AG04450 (cell line): ENCODE measurements at regions of chr13 and their contacts with region 1.

Region 1: DNA sequence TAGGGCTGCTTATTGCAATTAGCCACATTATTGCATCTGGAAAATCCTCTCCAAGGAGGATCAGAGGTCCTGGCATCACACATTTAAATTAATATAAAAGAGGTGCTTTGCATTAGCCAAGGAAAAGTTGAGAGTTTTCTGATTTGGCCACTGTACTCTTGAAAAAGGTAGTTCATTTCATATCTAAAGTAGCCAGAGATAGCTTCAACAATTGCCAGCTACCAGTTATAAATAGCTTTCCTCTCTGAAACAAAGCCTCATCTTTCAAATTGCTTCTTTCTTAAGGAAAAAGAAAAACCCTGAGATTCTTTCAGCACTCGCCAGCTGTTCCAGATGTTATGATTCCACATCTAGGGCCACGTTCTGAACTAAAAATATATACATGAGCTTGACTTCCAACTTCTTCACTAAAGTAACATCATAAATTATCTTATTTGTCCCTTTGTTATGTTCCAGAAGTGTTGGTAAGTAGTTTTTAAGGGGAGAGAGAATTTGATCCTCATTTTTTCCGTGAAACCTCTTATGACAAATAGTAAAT is 69.6 kb downstream of the ERCC5 start:
- DNase-seq: no peak
- H3K4me3 ChIP-seq: no peak overlapping the region
- H3K27ac ChIP-seq: no peak overlapping the region
- H3K27me3 ChIP-seq: no peaks in the 10 kb centered on the region
- CTCF ChIP-seq: no peak

Region 2: DNA sequence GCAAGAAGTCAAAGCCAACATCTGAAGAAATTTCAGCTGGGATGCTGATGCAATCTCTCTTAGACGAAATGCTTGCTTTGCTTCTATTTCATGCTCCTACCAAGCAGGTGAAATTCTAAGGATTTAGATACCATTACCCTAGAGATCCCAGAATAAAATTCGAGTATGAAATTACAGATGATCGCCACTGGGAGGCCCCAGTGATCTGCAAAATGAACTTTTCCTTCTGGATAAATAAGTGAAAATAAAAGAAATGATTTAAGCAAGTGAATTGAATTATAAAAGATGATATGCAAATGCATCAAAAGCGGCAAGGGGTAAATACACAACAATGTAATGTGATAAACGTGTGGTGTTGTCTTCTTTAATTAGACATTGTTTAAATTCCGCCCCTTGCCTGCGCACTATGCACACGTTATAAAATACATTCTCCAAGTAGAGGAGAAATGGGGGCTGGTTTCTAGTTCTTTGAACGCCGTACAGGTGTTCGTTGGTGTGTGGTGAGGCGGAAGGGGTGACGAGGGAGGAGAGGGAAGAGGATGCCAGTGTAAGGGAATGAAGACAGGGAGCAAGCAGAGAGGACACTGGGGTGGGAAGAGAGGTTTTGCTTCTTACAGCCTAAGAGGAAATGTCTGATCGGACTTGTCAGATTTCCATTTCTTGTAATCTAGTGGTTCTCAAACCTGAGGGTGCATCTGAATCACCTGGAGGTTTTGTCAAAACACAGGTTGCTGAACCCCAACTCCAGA is 11.6 kb before region 1 on chr13:
- CTCF ChIA-PET with region 1: interaction called, 19 read pairs
- POLR2A ChIA-PET with region 1: no interaction called
- DNase-seq: no peak
- H3K4me3 ChIP-seq: no peak overlapping the region
- H3K27ac ChIP-seq: no peak overlapping the region
- H3K27me3 ChIP-seq: no peaks in the 10 kb centered on the region
- CTCF ChIP-seq: peak; percentile 50